Adrenal gland (tissue), 19 donors: ENCODE measurements at regions of chr18 and their contacts with region 1.

Region 1: DNA sequence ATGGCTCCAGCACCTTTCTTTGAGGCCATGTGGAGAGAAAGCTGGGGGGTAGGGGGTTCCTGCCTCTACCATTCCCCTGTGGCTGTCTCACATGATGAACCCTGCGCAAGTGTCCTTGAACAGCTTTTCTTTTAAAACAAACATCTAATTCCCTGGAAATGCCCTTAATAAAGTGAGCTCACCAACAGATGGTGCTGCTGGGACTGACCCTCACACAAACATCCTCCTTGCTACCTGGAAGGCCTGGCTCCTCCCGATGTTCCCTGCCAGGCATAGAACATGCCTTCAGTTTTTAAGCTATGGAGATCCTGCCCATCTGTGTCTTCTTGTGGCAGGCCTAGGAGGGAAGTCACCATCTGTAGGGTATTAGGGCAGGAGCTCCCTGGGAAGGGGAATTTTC is 60.7 kb upstream of the GATA6 start:
- DNase-seq: peak in 4 of 7 donors; percentile 18 to 39 (median 24)
- H3K4me3 ChIP-seq: no peak overlapping the region
- H3K27ac ChIP-seq: no peak overlapping the region
- H3K4me1 ChIP-seq: no peaks in the 10 kb centered on the region
- H3K27me3 ChIP-seq: no peaks in the 10 kb centered on the region
- CTCF ChIP-seq: peak in 2 of 6 experiments; percentile 11 to 20
- POLR2A ChIP-seq: no peak

Region 2: GRCh38 chr18:22005191-22005841 is 103.4 kb before region 1 on chr18:
- intact Hi-C with region 1: loop called in 1 of 2 experiments (anchors 10 kb)
- DNase-seq: peak in 4 of 7 donors; percentile 13 to 58 (median 39)
- H3K4me3 ChIP-seq: no peak overlapping the region
- H3K27ac ChIP-seq: no peak overlapping the region
- H3K4me1 ChIP-seq: peaks cover 0 to 3% of the 10 kb centered on the region in 2 donors
- H3K27me3 ChIP-seq: no peaks in the 10 kb centered on the region
- CTCF ChIP-seq: no peak
- POLR2A ChIP-seq: no peak